ENCODE measurements at regions of chr17 and their contacts with region 1.

Region 1: GRCh38 chr17:15502369-15503112 is 35.1 kb upstream of the CDRT4 start:
- DNase-seq: peak; percentile 87
- ATAC-seq: peak; percentile 97
- H3K4me3 Mint-ChIP-seq: no peak overlapping the region
- H3K27ac Mint-ChIP-seq: peak overlapping the region; percentile 28
- H3K4me1 Mint-ChIP-seq: peaks cover 6% of the 10 kb centered on the region
- H3K27me3 Mint-ChIP-seq: no peaks in the 10 kb centered on the region
- CTCF ChIP-seq: peak; percentile 75

Region 2: GRCh38 chr17:15257258-15257788 is 245.2 kb before region 1 on chr17:
- CTCF ChIA-PET with region 1: interaction called, 76 read pairs
- POLR2A ChIA-PET with region 1: interaction called, 4 read pairs
- intact Hi-C with region 1: loop called (anchors 5 kb)
- DNase-seq: peak; percentile 81
- ATAC-seq: peak; percentile 71
- H3K4me3 Mint-ChIP-seq: no peak overlapping the region
- H3K27ac Mint-ChIP-seq: no peak overlapping the region
- H3K4me1 Mint-ChIP-seq: peaks cover 21% of the 10 kb centered on the region
- H3K27me3 Mint-ChIP-seq: peaks cover 59% of the 10 kb centered on the region
- CTCF ChIP-seq: peak; percentile 91

Region 3: DNA sequence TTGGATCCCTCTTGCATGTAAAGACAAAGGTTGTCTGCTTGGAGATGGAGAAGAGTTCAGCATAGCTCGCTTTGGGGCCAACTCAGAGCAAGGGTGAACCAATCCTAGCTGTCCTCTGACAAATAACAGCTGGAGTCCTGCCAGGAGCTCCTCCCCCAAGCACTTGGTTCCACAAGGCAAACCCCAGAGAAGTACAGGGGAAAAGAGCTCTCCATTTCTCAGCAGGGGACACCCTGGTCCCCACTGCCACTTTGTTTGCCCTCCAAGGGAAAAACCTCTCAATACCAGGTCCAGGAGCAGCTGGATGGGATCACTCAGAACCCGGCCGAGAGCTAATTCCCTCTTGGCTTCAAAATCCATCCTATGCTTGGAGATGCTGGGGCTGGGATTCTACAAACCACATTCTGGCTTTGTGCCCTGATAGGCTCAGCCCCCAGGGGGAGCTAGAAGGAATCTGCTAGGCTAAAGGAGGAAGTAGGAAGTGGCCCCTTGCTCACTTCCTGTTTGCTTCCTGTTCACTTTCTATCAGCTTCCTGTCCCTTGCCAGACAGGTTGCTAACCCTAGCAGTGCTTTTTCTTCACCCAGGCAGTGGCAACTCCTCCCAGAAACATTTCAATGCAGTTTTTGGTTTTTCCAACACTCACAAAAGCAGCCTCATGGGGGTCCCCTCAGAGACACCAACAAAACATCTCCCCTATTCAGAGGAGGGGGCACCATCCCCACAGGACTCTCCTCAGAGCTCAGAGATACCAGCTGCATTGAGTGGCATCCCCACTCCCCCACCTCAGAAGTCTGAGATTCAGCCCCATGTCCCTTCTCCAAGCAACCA is 65.9 kb before region 1 on chr17:
- CTCF ChIA-PET with region 1: interaction called, 18 read pairs
- POLR2A ChIA-PET with region 1: no interaction called
- intact Hi-C with region 1: no loop called
- DNase-seq: peak; percentile 61
- ATAC-seq: peak; percentile 51
- H3K4me3 Mint-ChIP-seq: no peak overlapping the region
- H3K27ac Mint-ChIP-seq: peak overlapping the region; percentile 79
- H3K4me1 Mint-ChIP-seq: peaks cover 13% of the 10 kb centered on the region
- H3K27me3 Mint-ChIP-seq: no peaks in the 10 kb centered on the region
- CTCF ChIP-seq: peak; percentile 32

Region 4: GRCh38 chr17:15488557-15488956 is 14.0 kb before region 1 on chr17:
- CTCF ChIA-PET with region 1: interaction called, 10 read pairs
- POLR2A ChIA-PET with region 1: no interaction called
- intact Hi-C with region 1: no loop called
- DNase-seq: no peak
- ATAC-seq: no peak
- H3K4me3 Mint-ChIP-seq: no peak overlapping the region
- H3K27ac Mint-ChIP-seq: no peak overlapping the region
- H3K4me1 Mint-ChIP-seq: peaks cover 4% of the 10 kb centered on the region
- H3K27me3 Mint-ChIP-seq: no peaks in the 10 kb centered on the region
- CTCF ChIP-seq: no peak

Region 5: GRCh38 chr17:15513058-15513858 is 10.7 kb after region 1 on chr17:
- CTCF ChIA-PET with region 1: interaction called, 10 read pairs
- POLR2A ChIA-PET with region 1: no interaction called
- intact Hi-C with region 1: no loop called
- DNase-seq: no peak
- ATAC-seq: no peak
- H3K4me3 Mint-ChIP-seq: no peak overlapping the region
- H3K27ac Mint-ChIP-seq: no peak overlapping the region
- H3K4me1 Mint-ChIP-seq: peaks cover 3% of the 10 kb centered on the region
- H3K27me3 Mint-ChIP-seq: no peaks in the 10 kb centered on the region
- CTCF ChIP-seq: no peak